ENCODE measurements at regions of chr16 and their contacts with region 1.

Region 1: GRCh38 chr16:87464691-87465300 is 28.0 kb downstream of the ZCCHC14 start:
- DNase-seq: peak; percentile 77
- H3K4me3 Mint-ChIP-seq: peak overlapping the region; percentile 68
- H3K27ac Mint-ChIP-seq: peak overlapping the region; percentile 91
- H3K4me1 Mint-ChIP-seq: peaks cover 47% of the 10 kb centered on the region
- H3K27me3 Mint-ChIP-seq: no peaks in the 10 kb centered on the region

Region 2: DNA sequence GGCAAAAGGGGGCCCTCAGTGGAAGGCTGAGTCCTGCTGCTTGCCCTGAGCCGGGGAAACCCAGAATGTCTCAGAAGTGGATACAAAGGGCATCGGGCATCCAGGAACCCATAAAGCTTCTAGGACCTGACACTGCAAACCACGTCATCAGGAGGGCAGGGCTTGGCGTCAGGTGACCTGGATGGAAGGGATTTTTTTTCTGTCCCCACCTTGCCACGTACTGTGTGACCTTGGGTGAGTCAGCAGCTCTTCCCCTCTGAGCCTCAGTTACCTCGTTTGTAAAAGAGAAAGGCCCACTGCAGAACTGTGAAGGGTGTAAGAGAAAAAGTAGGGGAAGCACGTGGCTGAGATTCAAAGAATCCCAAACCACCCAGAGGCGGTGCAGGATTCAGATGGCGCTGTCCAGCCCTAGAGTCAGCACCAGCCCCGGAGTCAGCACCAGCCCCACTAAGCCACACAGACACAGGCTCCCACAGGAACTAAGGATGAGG is 201.3 kb before region 1 on chr16:
- CTCF ChIA-PET with region 1: no interaction called
- POLR2A ChIA-PET with region 1: no interaction called
- intact Hi-C with region 1: no loop called
- DNase-seq: no peak
- H3K4me3 Mint-ChIP-seq: no peak overlapping the region
- H3K27ac Mint-ChIP-seq: no peak overlapping the region
- H3K4me1 Mint-ChIP-seq: no peaks in the 10 kb centered on the region
- H3K27me3 Mint-ChIP-seq: no peaks in the 10 kb centered on the region

Region 3: DNA sequence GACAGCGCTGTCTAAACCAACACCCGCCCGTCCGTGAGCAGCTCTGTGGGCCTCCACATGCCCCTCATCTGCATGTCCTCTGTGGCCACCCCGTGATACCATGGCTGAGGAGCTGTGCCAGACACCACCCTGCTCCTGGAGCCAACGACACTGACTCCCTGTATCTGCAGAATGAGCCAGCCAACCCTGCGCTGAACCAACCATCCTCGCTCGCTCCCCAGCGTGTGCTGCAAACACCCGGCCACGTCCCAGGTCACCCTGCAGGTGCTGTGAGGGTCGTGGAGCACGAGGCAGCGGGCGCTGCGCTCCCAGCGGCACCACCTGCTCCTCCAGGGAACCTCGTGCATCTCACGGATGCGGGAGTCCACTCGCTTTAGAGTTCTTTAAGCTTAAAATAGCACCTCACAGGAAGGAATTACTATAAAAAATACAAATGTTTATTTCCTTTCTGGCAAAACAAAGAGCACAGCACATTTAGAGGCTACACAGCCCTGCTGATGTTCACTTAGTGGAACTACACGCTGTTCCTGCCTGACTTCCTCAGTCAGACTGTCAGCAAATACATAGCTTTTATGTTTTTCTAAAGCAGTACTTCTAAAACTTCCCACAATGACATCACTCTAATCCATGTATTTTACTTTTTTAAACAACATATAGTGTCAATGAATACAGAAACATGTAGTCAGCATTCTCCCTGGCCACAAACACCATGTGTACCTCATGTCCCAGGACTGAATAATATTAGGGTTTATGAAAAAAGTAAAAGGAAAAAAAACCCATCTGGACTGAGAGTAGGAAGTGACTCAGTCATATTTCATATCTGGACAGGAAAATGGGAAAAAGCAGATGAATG is 29.2 kb before region 1 on chr16:
- CTCF ChIA-PET with region 1: no interaction called
- POLR2A ChIA-PET with region 1: interaction called, 6 read pairs
- intact Hi-C with region 1: loop called (anchors 2 kb)
- DNase-seq: no peak
- H3K4me3 Mint-ChIP-seq: peak overlapping the region; percentile 26
- H3K27ac Mint-ChIP-seq: no peak overlapping the region
- H3K4me1 Mint-ChIP-seq: peaks cover 20% of the 10 kb centered on the region
- H3K27me3 Mint-ChIP-seq: no peaks in the 10 kb centered on the region

Measured in activated CD4-positive, alpha-beta memory T cell treated with anti-CD3 and anti-CD28 coated beads for 36 hours (primary cell).